ENCODE measurements at regions of chr1 and their contacts with region 1.

Region 1: GRCh38 chr1:16351994-16352841 is at the start of gene FBXO42:
- DNase-seq: peak; percentile 87 to 96 (median 92)
- H3K4me3 ChIP-seq: peak within 1 kb of the TSS; percentile 64
- H3K27ac ChIP-seq: peak within 1 kb of the TSS; percentile 69 to 78
- H3K4me1 ChIP-seq: peaks cover 4% of the 10 kb centered on the region
- H3K27me3 ChIP-seq: no peaks in the 10 kb centered on the region
- CTCF ChIP-seq: peak; percentile 13 to 74 (median 73)
- EP300 ChIP-seq: no peak
- POLR2A ChIP-seq: peak; percentile 97
- total RNA-seq, gene FBXO42: 17.7 to 35.3 (median 23.6) TPM

Region 2: GRCh38 chr1:16243936-16244649 is 108.1 kb before region 1 on chr1:
- intact Hi-C with region 1: loop called in 1 of 4 experiments (anchors 10 kb)
- DNase-seq: peak; percentile 76 to 91 (median 82)
- H3K4me3 ChIP-seq: no peak overlapping the region
- H3K27ac ChIP-seq: peak overlapping the region; percentile 23 to 46
- H3K4me1 ChIP-seq: peaks cover 23% of the 10 kb centered on the region
- H3K27me3 ChIP-seq: no peaks in the 10 kb centered on the region
- CTCF ChIP-seq: peak; percentile 74 to 93 (median 91)
- EP300 ChIP-seq: no peak
- POLR2A ChIP-seq: no peak

Region 3: GRCh38 chr1:16249596-16250241 is 102.5 kb before region 1 on chr1:
- intact Hi-C with region 1: loop called in 3 of 4 experiments (anchors 5 to 10 kb)
- DNase-seq: peak in 4 of 5 donors; percentile 51 to 83 (median 59)
- H3K4me3 ChIP-seq: no peak overlapping the region
- H3K27ac ChIP-seq: peak overlapping the region; percentile 38 to 82
- H3K4me1 ChIP-seq: peaks cover 26% of the 10 kb centered on the region
- H3K27me3 ChIP-seq: no peaks in the 10 kb centered on the region
- CTCF ChIP-seq: no peak
- EP300 ChIP-seq: peak; percentile 69
- POLR2A ChIP-seq: peak; percentile 30

Region 4: GRCh38 chr1:16396591-16396990 is 44.4 kb after region 1 on chr1:
- intact Hi-C with region 1: no loop called
- DNase-seq: peak in 3 of 5 donors; percentile 36 to 58 (median 40)
- H3K4me3 ChIP-seq: no peak overlapping the region
- H3K27ac ChIP-seq: no peak overlapping the region
- H3K4me1 ChIP-seq: peaks cover 3% of the 10 kb centered on the region
- H3K27me3 ChIP-seq: no peaks in the 10 kb centered on the region
- CTCF ChIP-seq: no peak
- EP300 ChIP-seq: no peak
- POLR2A ChIP-seq: no peak

Measured in ovary (tissue), 10 donors.